ENCODE measurements at regions of chr6 and their contacts with region 1.

Region 1: DNA sequence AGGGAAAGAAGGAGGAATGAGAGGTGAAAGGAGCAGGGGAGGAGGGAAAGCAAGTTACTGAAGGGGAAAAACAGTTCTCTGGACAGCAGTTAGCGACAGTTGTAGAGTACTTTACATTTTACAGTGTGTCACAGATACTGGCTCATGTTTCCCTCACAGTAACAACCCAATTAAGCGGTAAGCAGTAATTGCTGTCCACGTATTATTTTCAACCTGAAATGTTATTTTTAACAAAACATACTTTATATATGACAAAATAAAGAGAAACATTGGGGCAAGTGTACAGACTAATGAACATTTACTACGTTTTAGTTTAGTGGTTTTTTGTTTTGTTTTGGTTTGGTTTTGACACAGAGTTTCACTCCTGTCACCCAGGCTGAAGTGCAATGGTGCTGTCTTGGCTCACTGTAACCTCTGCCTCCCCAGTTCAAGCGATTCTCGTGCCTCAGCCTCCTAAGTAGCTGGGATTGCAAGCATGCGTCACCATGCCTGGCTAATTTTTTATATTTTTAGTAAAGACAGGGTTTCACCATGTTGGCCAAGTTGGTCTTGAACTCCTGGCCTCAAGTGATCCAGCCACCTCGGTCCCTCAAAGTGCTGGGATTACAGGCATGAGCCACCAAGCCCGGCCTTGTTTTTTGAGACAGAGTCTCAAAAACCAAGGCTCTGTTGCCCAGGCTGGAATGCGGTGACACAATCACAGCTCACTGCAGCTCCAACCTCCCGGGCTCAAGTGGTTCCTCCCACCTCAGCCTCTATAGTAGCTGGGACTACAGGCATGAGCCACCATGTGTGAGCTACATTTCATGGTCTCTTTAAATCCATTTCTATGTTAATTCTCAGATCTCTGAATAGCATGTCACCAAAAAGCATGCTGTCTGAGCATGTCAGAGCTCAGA is 22.6 kb upstream of the BTN3A2 start:
- DNase-seq: no peak
- ATAC-seq: peak in 1 of 2 donors; percentile 7
- H3K4me3 ChIP-seq: no peak overlapping the region
- H3K27ac ChIP-seq: no peak overlapping the region
- H3K4me1 ChIP-seq: no peaks in the 10 kb centered on the region
- H3K27me3 ChIP-seq: no peaks in the 10 kb centered on the region

Region 2: GRCh38 chr6:26571592-26572296 is 229.4 kb after region 1 on chr6:
- intact Hi-C with region 1: loop called in 1 of 4 experiments (anchors 5 kb)
- DNase-seq: peak; percentile 50 to 76 (median 60)
- ATAC-seq: peak; percentile 80
- H3K4me3 ChIP-seq: peak overlapping the region; percentile 68
- H3K27ac ChIP-seq: peak overlapping the region; percentile 56
- H3K4me1 ChIP-seq: no peaks in the 10 kb centered on the region
- H3K27me3 ChIP-seq: no peaks in the 10 kb centered on the region

Region 3: GRCh38 chr6:26596579-26597388 is 254.4 kb after region 1 on chr6 and contains the start of gene ABT1:
- intact Hi-C with region 1: loop called (anchors 5 to 10 kb)
- DNase-seq: peak; percentile 98 to 99 (median 99)
- ATAC-seq: peak; percentile 97 to 98
- H3K4me3 ChIP-seq: peak within 1 kb of the TSS; percentile 67
- H3K27ac ChIP-seq: peak within 1 kb of the TSS; percentile 68
- H3K4me1 ChIP-seq: peaks cover 2% of the 10 kb centered on the region
- H3K27me3 ChIP-seq: no peaks in the 10 kb centered on the region
- total RNA-seq, gene ABT1: 8.9 to 9.5 (median 9.3) TPM

Region 4: GRCh38 chr6:27078734-27079357 is 736.5 kb after region 1 on chr6:
- intact Hi-C with region 1: loop called in 1 of 4 experiments (anchors 10 kb)
- DNase-seq: peak in 1 of 3 donors; percentile 14
- ATAC-seq: peak; percentile 59 to 78
- H3K4me3 ChIP-seq: peak overlapping the region; percentile 16
- H3K27ac ChIP-seq: no peak overlapping the region
- H3K4me1 ChIP-seq: no peaks in the 10 kb centered on the region
- H3K27me3 ChIP-seq: no peaks in the 10 kb centered on the region